Stomach (tissue), 19 donors: ENCODE measurements at regions of chr16 and their contacts with region 1.

Region 1: DNA sequence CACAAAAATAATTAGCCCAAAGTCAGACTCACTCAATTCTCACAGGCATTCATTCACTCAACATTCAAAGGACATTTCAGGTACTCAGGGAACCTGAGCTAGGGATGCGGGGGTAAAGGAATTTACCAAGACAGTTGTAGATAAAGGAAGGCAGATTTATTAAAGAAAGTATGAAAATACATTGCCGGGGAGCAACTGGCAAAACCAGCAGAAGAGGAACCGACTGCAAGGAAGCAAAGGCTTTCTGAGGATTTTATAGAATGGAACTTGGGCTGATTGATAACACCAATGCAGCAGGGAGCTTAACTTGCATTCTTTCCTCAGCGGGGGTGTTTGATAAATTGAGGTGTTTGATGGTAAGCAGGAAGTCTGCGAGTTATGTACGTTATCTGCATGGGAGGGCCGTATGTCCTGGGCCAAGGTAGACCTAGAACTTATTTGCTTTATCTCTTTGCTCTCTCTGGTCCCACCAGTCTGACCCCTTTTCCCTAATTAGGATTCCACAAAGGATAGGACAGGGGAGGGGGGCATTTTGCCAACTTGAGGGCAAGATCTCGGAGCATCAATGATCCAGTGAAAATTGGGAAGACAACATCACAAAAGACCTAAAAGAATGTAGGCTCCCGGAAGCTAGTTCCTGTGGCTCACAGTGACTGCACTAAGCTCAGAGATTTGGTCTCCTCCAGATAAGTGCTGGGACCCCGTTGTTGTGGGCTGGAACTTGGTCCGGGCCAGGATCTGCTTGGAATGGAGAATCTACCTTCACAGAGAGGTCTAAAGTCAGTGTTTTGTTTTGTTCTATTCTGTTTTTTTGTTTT is 5.8 kb upstream of the MT3 start:
- DNase-seq: no peak
- H3K4me3 ChIP-seq: no peak overlapping the region
- H3K27ac ChIP-seq: no peak overlapping the region
- H3K4me1 ChIP-seq: no peaks in the 10 kb centered on the region
- H3K27me3 ChIP-seq: peaks cover 0 to 31% (median 2%) of the 10 kb centered on the region in 3 donors
- CTCF ChIP-seq: no peak
- EP300 ChIP-seq: no peak
- POLR2A ChIP-seq: no peak

Region 2: DNA sequence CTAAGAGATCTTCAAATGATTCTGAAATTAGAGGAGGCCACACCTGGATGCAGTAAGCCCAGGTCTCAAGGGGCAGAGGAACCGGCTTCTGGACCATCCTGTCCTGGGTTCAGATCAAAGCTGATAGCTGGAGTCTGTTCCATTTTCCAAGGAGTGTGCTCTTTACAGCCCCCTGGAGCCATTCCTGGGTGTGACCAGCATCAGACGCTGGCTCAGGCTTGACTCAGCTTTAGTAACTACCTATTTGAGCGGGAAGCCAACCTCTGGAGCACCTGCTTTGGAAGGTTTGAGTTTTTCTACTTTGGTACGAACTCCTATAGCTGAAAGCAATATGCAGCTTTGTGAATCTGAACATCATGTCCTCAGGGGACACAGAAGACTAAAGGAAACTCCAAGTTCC is 50.8 kb before region 1 on chr16:
- intact Hi-C with region 1: no loop called
- DNase-seq: no peak
- H3K4me3 ChIP-seq: no peak overlapping the region
- H3K27ac ChIP-seq: no peak overlapping the region
- H3K4me1 ChIP-seq: no peaks in the 10 kb centered on the region
- H3K27me3 ChIP-seq: peaks cover 0 to 17% (median 0%) of the 10 kb centered on the region in 3 donors
- CTCF ChIP-seq: no peak
- EP300 ChIP-seq: no peak
- POLR2A ChIP-seq: no peak

Region 3: GRCh38 chr16:56700195-56700594 is 116.6 kb after region 1 on chr16:
- intact Hi-C with region 1: loop called (anchors 5 kb)
- DNase-seq: no peak
- H3K4me3 ChIP-seq: no peak overlapping the region
- H3K27ac ChIP-seq: no peak overlapping the region
- H3K4me1 ChIP-seq: peaks cover 0 to 7% (median 4%) of the 10 kb centered on the region in 4 donors
- H3K27me3 ChIP-seq: no peaks in the 10 kb centered on the region
- CTCF ChIP-seq: no peak
- EP300 ChIP-seq: no peak
- POLR2A ChIP-seq: no peak

Region 4: DNA sequence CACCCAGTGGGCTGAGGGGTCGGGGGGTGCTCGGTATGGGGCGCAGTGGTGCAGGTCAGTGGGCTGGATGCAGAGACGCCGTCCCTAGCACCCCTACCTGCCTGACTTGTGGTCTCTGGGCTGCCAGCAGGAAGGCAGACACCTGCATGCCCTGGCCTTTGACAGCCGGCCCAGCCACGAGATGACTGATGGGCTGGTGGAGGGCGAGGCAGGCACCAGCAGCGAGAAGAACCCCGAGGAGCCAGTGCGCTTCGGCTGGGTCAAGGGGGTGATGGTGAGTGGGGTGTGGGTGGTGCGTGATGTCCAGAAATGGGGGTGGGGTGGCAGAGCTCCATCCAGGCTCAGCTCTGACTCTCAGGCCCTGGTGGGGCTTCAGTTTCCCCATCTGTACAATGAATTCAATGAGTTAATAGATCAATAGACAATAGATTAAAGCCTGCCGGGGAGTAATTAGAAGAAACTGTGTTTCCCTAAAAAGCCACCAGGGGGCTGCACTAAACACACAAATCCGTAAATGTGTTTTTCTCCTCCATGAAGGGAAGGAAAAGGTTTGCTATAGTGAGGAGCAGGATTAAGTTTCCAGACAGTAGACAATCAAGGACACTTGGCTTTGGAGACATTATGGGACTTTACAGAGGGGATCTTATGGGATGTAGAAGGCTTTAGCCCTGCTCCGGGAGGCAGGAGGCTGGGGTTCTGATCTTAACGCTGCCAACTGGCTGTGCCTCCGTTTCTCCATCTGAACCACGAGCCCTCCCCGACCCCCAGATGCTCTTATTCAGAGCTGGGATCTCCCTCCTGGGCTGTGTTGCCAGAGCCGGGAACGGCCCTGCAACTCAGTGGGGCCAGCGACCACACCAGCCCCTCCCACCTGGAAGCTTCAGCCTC is 283.6 kb after region 1 on chr16:
- intact Hi-C with region 1: no loop called
- DNase-seq: peak; percentile 53 to 83
- H3K4me3 ChIP-seq: no peak overlapping the region
- H3K27ac ChIP-seq: no peak overlapping the region
- H3K4me1 ChIP-seq: peaks cover 0 to 16% (median 9%) of the 10 kb centered on the region in 4 donors
- H3K27me3 ChIP-seq: no peaks in the 10 kb centered on the region
- CTCF ChIP-seq: peak in 5 of 7 experiments; percentile 57 to 86 (median 83)
- EP300 ChIP-seq: no peak
- POLR2A ChIP-seq: no peak